ENCODE measurements at regions of chr21 and their contacts with region 1.

Region 1: DNA sequence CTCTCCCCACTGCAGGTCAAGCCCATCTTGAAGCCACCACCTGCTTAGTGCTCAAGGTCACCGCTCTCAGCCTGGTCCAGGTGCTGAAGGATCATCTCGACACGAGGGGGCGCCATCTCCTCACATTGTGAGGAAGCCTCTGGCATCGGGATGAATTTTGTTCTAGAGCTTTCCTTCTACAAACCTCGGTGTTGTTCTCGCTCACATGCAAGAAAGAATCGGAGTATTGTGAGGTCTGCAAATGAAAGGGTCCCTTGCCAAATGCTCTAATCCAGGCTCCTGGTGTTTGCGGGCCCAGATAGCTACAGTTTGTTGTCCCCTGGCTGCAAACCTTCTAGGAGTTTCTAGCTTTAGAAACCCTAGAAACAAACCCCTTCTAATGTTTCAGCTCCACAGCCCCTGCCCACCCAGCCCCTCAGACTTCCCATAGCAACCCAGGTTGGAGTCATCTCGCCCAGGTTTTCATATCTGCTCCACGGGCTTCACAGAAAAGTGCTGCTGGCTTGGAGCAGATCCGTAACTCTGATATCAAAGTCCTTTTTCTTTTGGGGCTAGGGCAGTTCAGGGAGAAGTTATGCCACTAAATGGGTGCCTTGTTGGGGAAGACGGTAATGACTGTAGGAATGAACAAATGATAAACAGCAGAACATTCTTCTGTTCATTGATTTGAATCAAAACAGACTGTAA is 8.6 kb upstream of the ATP5PO start:
- DNase-seq: peak; percentile 67
- ATAC-seq: peak; percentile 99
- H3K4me3 ChIP-seq: no peak overlapping the region
- H3K27ac ChIP-seq: no peak overlapping the region
- H3K4me1 ChIP-seq: peaks cover 7% of the 10 kb centered on the region
- H3K27me3 ChIP-seq: no peaks in the 10 kb centered on the region
- CTCF ChIP-seq: peak; percentile 87 to 98 (median 91); a peak in 5 of 6 replicates
- EP300 ChIP-seq: no peak
- POLR2A ChIP-seq: no peak
- RAD21 ChIP-seq: peak; percentile 100

Region 2: GRCh38 chr21:32306021-32306780 is 1618.0 kb before region 1 on chr21:
- CTCF ChIA-PET with region 1: no interaction called
- POLR2A ChIA-PET with region 1: no interaction called
- RAD21 ChIA-PET with region 1: no interaction called
- SMC1A ChIA-PET with region 1: no interaction called
- in situ Hi-C with region 1: no loop called
- intact Hi-C with region 1: no loop called
- DNase-seq: no peak
- ATAC-seq: no peak
- H3K4me3 ChIP-seq: no peak overlapping the region
- H3K27ac ChIP-seq: no peak overlapping the region
- H3K4me1 ChIP-seq: no peaks in the 10 kb centered on the region
- H3K27me3 ChIP-seq: no peaks in the 10 kb centered on the region
- CTCF ChIP-seq: 0 out of 6 replicates have a peak, but pooled peaks of 1 of the 3 experiments have one; percentile 7
- EP300 ChIP-seq: no peak
- POLR2A ChIP-seq: no peak
- RAD21 ChIP-seq: no peak

Region 3: GRCh38 chr21:33947451-33948095 is 23.4 kb after region 1 on chr21:
- CTCF ChIA-PET with region 1: interaction called, 71 read pairs
- POLR2A ChIA-PET with region 1: interaction called, 6 read pairs
- RAD21 ChIA-PET with region 1: interaction called, 55 read pairs
- SMC1A ChIA-PET with region 1: interaction called, 37 read pairs
- in situ Hi-C with region 1: no loop called
- intact Hi-C with region 1: no loop called
- DNase-seq: peak; percentile 83
- ATAC-seq: peak; percentile 72
- H3K4me3 ChIP-seq: peak overlapping the region; percentile 46; the same call in 1 of the 2 replicates
- H3K27ac ChIP-seq: peak overlapping the region; percentile 97
- H3K4me1 ChIP-seq: peaks cover 51% of the 10 kb centered on the region
- H3K27me3 ChIP-seq: no peaks in the 10 kb centered on the region
- CTCF ChIP-seq: peak in 1 of 3 experiments; percentile 15; a peak in 1 of 6 replicates
- EP300 ChIP-seq: peak in 1 of 2 experiments; percentile 62; a peak in 3 of 4 replicates
- POLR2A ChIP-seq: no peak; the same call in 1 of the 2 replicates
- RAD21 ChIP-seq: peak; percentile 33; the same call in 1 of the 2 replicates

Region 4: GRCh38 chr21:34020005-34020847 is 96.0 kb after region 1 on chr21:
- CTCF ChIA-PET with region 1: interaction called, 48 read pairs
- POLR2A ChIA-PET with region 1: interaction called, 3 read pairs
- RAD21 ChIA-PET with region 1: interaction called, 66 read pairs
- SMC1A ChIA-PET with region 1: interaction called, 56 read pairs
- in situ Hi-C with region 1: no loop called
- intact Hi-C with region 1: loop called (anchors 1 kb)
- DNase-seq: peak; percentile 92
- ATAC-seq: peak; percentile 60
- H3K4me3 ChIP-seq: peak overlapping the region; percentile 18; the same call in 1 of the 2 replicates
- H3K27ac ChIP-seq: peak overlapping the region; percentile 93
- H3K4me1 ChIP-seq: peaks cover 58% of the 10 kb centered on the region
- H3K27me3 ChIP-seq: no peaks in the 10 kb centered on the region
- CTCF ChIP-seq: peak in 1 of 3 experiments; percentile 23; a peak in 2 of 6 replicates
- EP300 ChIP-seq: peak; percentile 58; a peak in 3 of 4 replicates
- POLR2A ChIP-seq: no peak
- RAD21 ChIP-seq: peak; percentile 29; the same call in 1 of the 2 replicates

Region 5: DNA sequence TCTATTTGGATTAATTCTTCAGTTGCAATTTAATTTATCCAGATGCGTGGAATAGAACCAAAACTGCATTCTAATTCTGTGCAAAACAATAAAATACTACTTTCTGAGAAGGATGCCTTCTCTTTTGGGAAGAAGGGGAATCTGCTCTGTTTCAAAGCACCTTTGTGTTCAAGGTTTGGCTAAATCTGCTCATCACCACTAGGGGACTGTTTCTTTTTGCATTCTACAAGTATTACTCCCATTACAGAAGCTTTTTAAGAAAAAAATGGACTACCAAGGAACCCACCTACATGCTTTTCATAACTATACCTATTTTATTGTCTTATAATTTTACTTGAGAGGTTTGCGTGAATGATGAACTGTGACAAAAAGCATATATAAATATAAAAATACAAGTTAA is 167.4 kb after region 1 on chr21:
- CTCF ChIA-PET with region 1: interaction called, 9 read pairs
- POLR2A ChIA-PET with region 1: no interaction called
- RAD21 ChIA-PET with region 1: interaction called, 5 read pairs
- SMC1A ChIA-PET with region 1: interaction called, 18 read pairs
- in situ Hi-C with region 1: loop called (anchors 10 kb)
- intact Hi-C with region 1: no loop called
- DNase-seq: no peak
- ATAC-seq: peak; percentile 50
- H3K4me3 ChIP-seq: no peak overlapping the region
- H3K27ac ChIP-seq: no peak overlapping the region
- H3K4me1 ChIP-seq: no peaks in the 10 kb centered on the region; the same call in 1 of the 2 replicates
- H3K27me3 ChIP-seq: no peaks in the 10 kb centered on the region
- CTCF ChIP-seq: peak; percentile 22 to 46 (median 39); a peak in 4 of 6 replicates
- EP300 ChIP-seq: no peak
- POLR2A ChIP-seq: no peak
- RAD21 ChIP-seq: peak; percentile 28; the same call in 1 of the 2 replicates

Region 6: GRCh38 chr21:34235514-34235913 is 311.3 kb after region 1 on chr21:
- CTCF ChIA-PET with region 1: interaction called, 41 read pairs
- POLR2A ChIA-PET with region 1: no interaction called
- RAD21 ChIA-PET with region 1: interaction called, 27 read pairs
- SMC1A ChIA-PET with region 1: interaction called, 29 read pairs
- in situ Hi-C with region 1: no loop called
- intact Hi-C with region 1: loop called (anchors 5 kb)
- DNase-seq: no peak
- ATAC-seq: no peak
- H3K4me3 ChIP-seq: no peak overlapping the region
- H3K27ac ChIP-seq: no peak overlapping the region
- H3K4me1 ChIP-seq: no peaks in the 10 kb centered on the region
- H3K27me3 ChIP-seq: no peaks in the 10 kb centered on the region
- CTCF ChIP-seq: no peak
- EP300 ChIP-seq: no peak
- POLR2A ChIP-seq: no peak
- RAD21 ChIP-seq: no peak

Region 7: DNA sequence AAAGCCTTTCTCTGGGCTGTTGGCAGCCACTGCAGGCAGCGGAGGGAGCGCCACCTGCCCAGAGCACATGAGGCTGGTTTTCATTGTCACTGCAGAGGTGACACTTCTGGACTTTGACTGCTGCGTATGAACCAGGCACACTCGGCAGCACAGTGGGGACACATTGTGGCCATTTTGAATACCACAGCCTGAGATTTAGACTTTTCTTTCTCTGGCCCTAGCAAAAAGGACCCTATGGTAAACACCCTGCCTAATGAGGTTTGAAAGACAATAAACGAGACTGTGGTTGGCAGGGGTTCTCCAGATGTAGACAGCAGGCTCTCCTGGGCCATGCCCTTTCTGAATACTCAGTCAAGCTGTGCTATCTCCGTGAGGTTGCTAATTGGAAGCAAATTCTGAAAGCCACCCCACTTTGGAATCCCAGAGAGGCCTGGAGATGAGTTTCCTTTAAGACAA is 427.6 kb after region 1 on chr21:
- CTCF ChIA-PET with region 1: interaction called, 349 read pairs
- POLR2A ChIA-PET with region 1: interaction called, 21 read pairs
- RAD21 ChIA-PET with region 1: interaction called, 241 read pairs
- SMC1A ChIA-PET with region 1: interaction called, 169 read pairs
- in situ Hi-C with region 1: loop called (anchors 5 kb)
- intact Hi-C with region 1: loop called (anchors 1 kb)
- DNase-seq: peak; percentile 28
- ATAC-seq: peak; percentile 96
- H3K4me3 ChIP-seq: no peak overlapping the region
- H3K27ac ChIP-seq: no peak overlapping the region
- H3K4me1 ChIP-seq: no peaks in the 10 kb centered on the region
- H3K27me3 ChIP-seq: no peaks in the 10 kb centered on the region; a peak in 1 of 4 replicates
- CTCF ChIP-seq: peak; percentile 64 to 88 (median 69)
- EP300 ChIP-seq: no peak
- POLR2A ChIP-seq: no peak
- RAD21 ChIP-seq: peak; percentile 83

Measured in GM12878 (cell line).